Ascending aorta (tissue), 2 donors: ENCODE measurements at regions of chr10 and their contacts with region 1.

Region 1: GRCh38 chr10:114427124-114427852 is 23.0 kb upstream of the AFAP1L2 start:
- DNase-seq: no peak
- H3K4me3 ChIP-seq: no peak overlapping the region
- H3K27ac ChIP-seq: peak overlapping the region in 1 of 2 donors; percentile 24
- H3K4me1 ChIP-seq: peaks cover 0 to 6% of the 10 kb centered on the region in 2 donors
- H3K27me3 ChIP-seq: no peaks in the 10 kb centered on the region
- CTCF ChIP-seq: no peak

Region 2: DNA sequence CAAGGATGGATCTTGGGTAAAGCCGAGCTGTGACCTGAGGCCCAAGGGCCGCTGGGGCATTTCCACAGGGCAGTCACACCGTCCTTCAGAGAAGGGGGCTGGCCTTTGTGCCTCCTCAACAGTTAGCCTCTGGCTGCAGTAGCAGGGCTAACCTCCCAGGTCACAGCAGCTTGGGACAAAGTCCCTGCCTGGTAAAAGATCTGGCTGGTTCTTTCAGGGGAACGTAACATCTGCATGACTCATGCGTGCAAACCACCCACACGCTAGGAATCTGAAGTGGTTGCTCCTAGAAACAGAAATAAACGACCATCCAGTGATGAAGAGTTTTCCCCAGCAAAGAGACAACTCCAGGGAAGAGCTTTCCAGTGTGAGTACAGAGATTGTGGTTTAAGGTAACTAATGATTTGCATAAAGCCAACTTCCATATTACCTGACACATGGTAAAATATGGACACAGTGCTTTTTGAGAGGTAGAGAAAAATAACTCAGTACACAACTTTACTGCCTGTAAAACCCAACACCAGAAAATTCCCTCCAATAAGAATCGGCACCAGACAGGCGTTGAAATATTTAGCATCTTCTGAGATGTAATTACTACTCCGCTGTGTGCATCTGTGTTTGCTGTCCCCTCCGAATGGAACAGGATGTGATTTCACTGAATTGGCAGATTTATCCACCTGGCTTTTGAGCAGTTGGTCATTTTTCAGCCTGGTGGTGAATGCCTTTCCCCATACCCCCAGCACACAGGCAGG is 468.5 kb before region 1 on chr10:
- intact Hi-C with region 1: no loop called
- DNase-seq: peak in 1 of 2 donors; percentile 71
- H3K4me3 ChIP-seq: no peak overlapping the region
- H3K27ac ChIP-seq: peak overlapping the region; percentile 59 to 64
- H3K4me1 ChIP-seq: peaks cover 3 to 14% of the 10 kb centered on the region in 2 donors
- H3K27me3 ChIP-seq: no peaks in the 10 kb centered on the region
- CTCF ChIP-seq: no peak

Region 3: GRCh38 chr10:114064151-114065048 is 362.9 kb before region 1 on chr10:
- intact Hi-C with region 1: no loop called
- DNase-seq: no peak
- H3K4me3 ChIP-seq: no peak overlapping the region
- H3K27ac ChIP-seq: no peak overlapping the region
- H3K4me1 ChIP-seq: no peaks in the 10 kb centered on the region
- H3K27me3 ChIP-seq: no peaks in the 10 kb centered on the region
- CTCF ChIP-seq: no peak

Region 4: DNA sequence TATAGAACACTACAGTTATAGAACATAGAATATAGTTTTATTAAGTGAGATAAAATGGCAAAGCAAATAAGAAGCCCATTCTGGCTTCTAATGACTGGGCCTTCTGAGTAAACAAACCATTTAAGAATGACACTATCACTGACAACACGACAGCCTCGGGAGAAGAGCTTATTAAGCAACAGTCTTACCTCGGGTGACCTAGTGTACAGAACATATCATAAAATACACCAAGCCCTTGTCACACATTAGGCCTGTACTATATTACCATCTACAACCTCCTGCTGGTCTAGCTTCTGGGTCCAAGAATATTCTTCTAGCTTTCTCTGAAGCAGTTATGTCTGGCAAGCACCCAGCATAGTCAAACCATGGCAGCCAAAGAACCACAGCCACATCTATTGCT is 285.3 kb before region 1 on chr10:
- intact Hi-C with region 1: loop called (anchors 10 kb)
- DNase-seq: no peak
- H3K4me3 ChIP-seq: no peak overlapping the region
- H3K27ac ChIP-seq: no peak overlapping the region
- H3K4me1 ChIP-seq: no peaks in the 10 kb centered on the region
- H3K27me3 ChIP-seq: no peaks in the 10 kb centered on the region
- CTCF ChIP-seq: no peak